ENCODE measurements at regions of chr13 and their contacts with region 1.

Region 1: GRCh38 chr13:26498656-26499591 is 58.6 kb upstream of the WASF3 start:
- DNase-seq: no peak

Region 2: GRCh38 chr13:26186118-26186870 is 312.6 kb before region 1 on chr13:
- intact Hi-C with region 1: loop called in 1 of 2 experiments (anchors 5 kb)
- DNase-seq: peak; percentile 95

Region 3: GRCh38 chr13:26698392-26699196 is 199.7 kb after region 1 on chr13:
- intact Hi-C with region 1: loop called (anchors 10 kb)
- DNase-seq: peak; percentile 96

Measured in posterior vena cava (tissue), 2 donors.